Spleen (tissue), 13 donors: ENCODE measurements at regions of chr7 and their contacts with region 1.

Region 1: GRCh38 chr7:23712368-23713284 is 2.6 kb downstream of the STK31 start:
- DNase-seq: no peak
- H3K4me3 ChIP-seq: no peak overlapping the region
- H3K27ac ChIP-seq: no peak overlapping the region
- H3K4me1 ChIP-seq: no peaks in the 10 kb centered on the region
- H3K27me3 ChIP-seq: no peaks in the 10 kb centered on the region
- CTCF ChIP-seq: peak; percentile 23 to 70 (median 57)
- POLR2A ChIP-seq: no peak

Region 2: GRCh38 chr7:23273141-23273599 is 439.5 kb before region 1 on chr7:
- intact Hi-C with region 1: loop called (anchors 10 kb)
- DNase-seq: peak; percentile 96
- H3K4me3 ChIP-seq: peak overlapping the region in 1 of 8 donors; percentile 45
- H3K27ac ChIP-seq: no peak overlapping the region
- H3K4me1 ChIP-seq: peaks cover 0 to 14% (median 6%) of the 10 kb centered on the region in 6 donors
- H3K27me3 ChIP-seq: no peaks in the 10 kb centered on the region
- CTCF ChIP-seq: peak; percentile 21 to 88 (median 67)
- POLR2A ChIP-seq: no peak

Region 3: GRCh38 chr7:23570592-23571200 is 141.9 kb before region 1 on chr7:
- intact Hi-C with region 1: loop called (anchors 5 kb)
- DNase-seq: peak; percentile 73
- H3K4me3 ChIP-seq: peak overlapping the region in 1 of 8 donors; percentile 21
- H3K27ac ChIP-seq: no peak overlapping the region
- H3K4me1 ChIP-seq: peaks cover 0 to 5% (median 3%) of the 10 kb centered on the region in 6 donors
- H3K27me3 ChIP-seq: peaks cover 0 to 29% (median 0%) of the 10 kb centered on the region in 7 donors
- CTCF ChIP-seq: peak; percentile 54 to 94 (median 81)
- POLR2A ChIP-seq: no peak

Region 4: GRCh38 chr7:24073651-24074420 is 361.2 kb after region 1 on chr7:
- intact Hi-C with region 1: no loop called
- DNase-seq: no peak
- H3K4me3 ChIP-seq: no peak overlapping the region
- H3K27ac ChIP-seq: no peak overlapping the region
- H3K4me1 ChIP-seq: no peaks in the 10 kb centered on the region
- H3K27me3 ChIP-seq: peaks cover 0 to 4% (median 0%) of the 10 kb centered on the region in 7 donors
- CTCF ChIP-seq: no peak
- POLR2A ChIP-seq: no peak